ENCODE measurements at regions of chr3 and their contacts with region 1.

Region 1: GRCh38 chr3:84547971-84548970 is 410.5 kb upstream of the CADM2 start:
- DNase-seq: no peak
- H3K4me3 Mint-ChIP-seq: no peak overlapping the region
- H3K27ac Mint-ChIP-seq: no peak overlapping the region
- H3K4me1 Mint-ChIP-seq: no peaks in the 10 kb centered on the region
- H3K27me3 Mint-ChIP-seq: no peaks in the 10 kb centered on the region

Region 2: DNA sequence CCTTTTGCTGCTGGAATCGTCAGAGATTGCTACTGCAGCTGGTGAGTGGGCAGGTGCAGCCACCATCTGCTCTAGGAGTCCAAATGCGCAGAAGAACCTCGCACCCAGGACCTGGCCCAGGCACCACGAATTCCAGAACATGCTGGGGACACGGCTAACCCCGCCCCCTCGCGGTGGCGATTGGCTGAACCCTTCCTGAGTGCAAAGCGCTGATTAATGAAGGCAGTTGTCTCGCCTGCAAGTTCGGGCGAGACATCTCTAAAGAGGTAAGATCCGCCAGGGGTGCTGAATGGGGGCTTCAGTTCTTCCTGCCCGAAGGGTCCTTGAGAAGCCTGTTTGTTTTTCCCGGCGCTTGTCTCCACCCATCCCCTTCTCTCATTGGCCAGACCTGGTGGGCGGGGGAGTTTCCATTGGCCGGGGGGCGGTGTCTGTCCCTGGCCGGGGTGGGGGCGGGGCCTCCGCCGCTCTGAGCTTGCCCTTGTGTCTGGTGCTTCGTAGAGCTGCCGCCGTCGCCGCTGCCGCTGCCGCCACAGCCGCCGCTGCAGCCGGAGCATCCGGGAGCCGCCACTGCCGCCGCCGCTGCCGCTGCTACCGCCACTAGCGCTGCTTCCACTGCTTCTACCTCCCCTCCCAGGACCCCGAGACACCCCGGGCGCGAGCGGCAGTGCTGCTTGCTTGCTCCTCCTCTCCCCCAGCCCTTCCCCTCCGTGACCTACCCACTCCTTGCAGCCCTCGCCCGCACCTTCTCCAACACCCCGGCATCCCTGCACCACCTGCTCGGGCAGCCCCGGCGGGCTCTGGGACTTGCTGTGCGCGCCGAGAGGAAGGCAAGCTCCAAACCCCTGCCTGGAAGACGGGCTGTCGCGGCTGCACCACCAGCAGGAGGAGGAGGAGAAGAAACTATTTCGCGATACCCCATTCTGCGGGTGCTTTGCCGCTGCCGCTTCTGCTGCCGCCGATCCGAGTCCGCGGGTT is 410.5 kb after region 1 on chr3 and contains the start of gene CADM2:
- intact Hi-C with region 1: loop called (anchors 5 kb)
- DNase-seq: peak; percentile 62
- H3K4me3 Mint-ChIP-seq: peak within 1 kb of the TSS; percentile 66
- H3K27ac Mint-ChIP-seq: no peak within 1 kb of the TSS
- H3K4me1 Mint-ChIP-seq: peaks cover 11% of the 10 kb centered on the region
- H3K27me3 Mint-ChIP-seq: peaks cover 26% of the 10 kb centered on the region
- total RNA-seq, gene CADM2: not detected in 2 replicates

Region 3: DNA sequence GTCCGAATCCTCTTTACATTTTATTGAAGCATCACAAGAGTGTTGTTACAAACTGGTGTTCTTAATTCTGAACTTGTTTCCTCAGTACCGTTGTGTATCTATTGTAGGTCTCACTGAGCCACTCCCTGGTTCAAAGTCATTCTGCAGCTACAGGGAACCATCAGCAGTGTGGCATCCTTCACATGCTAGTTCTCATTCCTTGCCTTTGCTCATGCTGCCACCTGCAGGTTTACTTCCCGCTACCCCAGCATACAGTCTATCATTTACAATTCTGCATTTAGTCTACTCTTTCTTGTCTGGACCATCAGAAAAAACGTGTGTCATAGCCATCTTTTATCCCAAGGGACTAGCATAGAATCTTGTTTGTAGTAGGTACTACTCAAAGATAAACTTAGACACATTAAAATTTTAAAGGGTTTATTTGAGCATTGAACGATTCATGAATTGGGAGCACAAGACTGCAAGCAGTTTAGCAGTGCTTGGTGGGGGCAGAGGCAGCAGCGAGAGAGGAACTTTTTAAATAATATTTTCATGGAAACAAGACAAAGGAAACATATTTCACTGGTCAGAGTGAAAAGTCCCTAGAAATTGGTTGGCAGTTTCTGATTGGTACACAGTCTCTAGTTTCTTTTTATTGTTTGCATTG is 812.6 kb after region 1 on chr3:
- intact Hi-C with region 1: loop called (anchors 2 kb)
- DNase-seq: no peak
- H3K4me3 Mint-ChIP-seq: no peak overlapping the region
- H3K27ac Mint-ChIP-seq: no peak overlapping the region
- H3K4me1 Mint-ChIP-seq: no peaks in the 10 kb centered on the region
- H3K27me3 Mint-ChIP-seq: peaks cover 1% of the 10 kb centered on the region

Region 4: DNA sequence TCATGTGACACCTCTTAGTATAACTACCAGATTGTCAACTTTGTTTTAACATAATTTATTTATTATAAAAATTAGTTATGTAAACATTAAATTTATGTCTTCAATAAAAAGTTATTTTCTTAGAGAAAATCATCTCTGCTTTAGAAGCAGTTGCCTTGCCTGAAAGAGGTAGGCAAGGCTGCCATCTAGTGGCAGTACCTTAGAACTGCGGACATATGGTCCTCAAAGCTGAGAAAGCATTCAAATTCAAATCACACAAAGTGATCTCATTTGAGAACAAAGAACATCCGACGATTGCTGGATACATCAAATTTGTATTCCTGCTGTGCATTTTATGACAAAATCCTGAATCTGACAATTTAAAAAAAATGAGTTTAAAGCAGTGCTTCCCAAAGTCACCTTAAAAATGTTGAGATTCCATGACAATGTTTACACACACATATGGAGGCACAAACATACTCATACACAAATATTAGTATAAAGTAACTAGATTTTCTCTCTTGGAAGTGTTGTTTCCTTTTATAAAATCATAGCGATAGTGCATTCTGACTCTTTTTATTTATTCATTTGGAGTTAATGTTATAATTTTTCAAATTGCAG is 1027.9 kb after region 1 on chr3:
- intact Hi-C with region 1: loop called (anchors 1 kb)
- DNase-seq: peak; percentile 14
- H3K4me3 Mint-ChIP-seq: no peak overlapping the region
- H3K27ac Mint-ChIP-seq: no peak overlapping the region
- H3K4me1 Mint-ChIP-seq: no peaks in the 10 kb centered on the region
- H3K27me3 Mint-ChIP-seq: no peaks in the 10 kb centered on the region